Kidney (tissue), 22 donors: ENCODE measurements at regions of chr1 and their contacts with region 1.

Region 1: DNA sequence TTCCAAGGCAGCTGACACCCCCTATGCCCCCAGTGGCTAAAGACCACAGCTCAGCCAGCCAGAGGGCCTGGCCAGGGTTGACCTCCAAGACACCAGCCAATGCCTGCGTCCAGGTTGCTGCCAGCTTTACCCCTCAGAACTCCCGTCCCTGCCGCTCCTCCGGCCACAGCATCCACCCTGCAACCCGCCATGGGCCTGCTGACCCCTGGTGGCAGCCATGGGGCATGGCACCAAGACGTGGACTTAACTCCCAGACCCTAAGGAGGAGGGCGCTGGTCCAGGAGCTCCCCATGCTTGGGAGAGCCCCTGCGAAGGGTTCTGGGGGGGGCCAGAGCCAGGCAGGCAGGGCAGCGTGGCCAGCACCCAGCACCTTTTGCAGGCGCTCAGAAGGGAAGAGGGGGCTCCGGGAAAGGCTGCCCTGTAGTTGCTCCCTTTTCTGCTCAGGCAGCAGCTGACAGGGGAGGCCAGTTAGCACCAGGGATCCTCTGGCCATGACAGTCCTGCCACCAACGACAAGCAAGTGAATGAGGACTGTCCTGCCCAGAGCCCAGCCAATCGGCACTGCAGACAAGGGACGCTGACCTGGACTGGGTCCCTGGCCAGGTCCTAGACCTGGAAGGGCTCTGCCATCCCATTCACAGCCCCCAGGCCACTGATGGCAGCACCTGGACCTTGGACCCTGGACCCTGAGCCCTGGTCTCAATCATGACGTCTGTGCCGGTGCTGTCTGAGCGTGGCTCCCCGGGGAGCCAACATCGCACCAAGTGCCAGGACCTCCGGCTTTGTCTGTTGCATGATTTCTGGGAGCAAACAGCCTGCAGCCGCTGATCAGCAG is 246.2 kb downstream of the NPHP4 start:
- DNase-seq: peak; percentile 76 to 86 (median 84)
- H3K4me3 ChIP-seq: no peak overlapping the region
- H3K27ac ChIP-seq: no peak overlapping the region
- H3K4me1 ChIP-seq: peaks cover 0 to 4% (median 0%) of the 10 kb centered on the region in 3 donors
- H3K27me3 ChIP-seq: no peaks in the 10 kb centered on the region
- CTCF ChIP-seq: peak; percentile 87

Region 2: GRCh38 chr1:4652631-4653327 is 1093.2 kb before region 1 on chr1:
- intact Hi-C with region 1: loop called (anchors 10 kb)
- DNase-seq: peak; percentile 57 to 86 (median 72)
- H3K4me3 ChIP-seq: no peak overlapping the region
- H3K27ac ChIP-seq: peak overlapping the region; percentile 37 to 71
- H3K4me1 ChIP-seq: peaks cover 0 to 11% (median 5%) of the 10 kb centered on the region in 3 donors
- H3K27me3 ChIP-seq: peaks cover 17% of the 10 kb centered on the region
- CTCF ChIP-seq: peak; percentile 83

Region 3: DNA sequence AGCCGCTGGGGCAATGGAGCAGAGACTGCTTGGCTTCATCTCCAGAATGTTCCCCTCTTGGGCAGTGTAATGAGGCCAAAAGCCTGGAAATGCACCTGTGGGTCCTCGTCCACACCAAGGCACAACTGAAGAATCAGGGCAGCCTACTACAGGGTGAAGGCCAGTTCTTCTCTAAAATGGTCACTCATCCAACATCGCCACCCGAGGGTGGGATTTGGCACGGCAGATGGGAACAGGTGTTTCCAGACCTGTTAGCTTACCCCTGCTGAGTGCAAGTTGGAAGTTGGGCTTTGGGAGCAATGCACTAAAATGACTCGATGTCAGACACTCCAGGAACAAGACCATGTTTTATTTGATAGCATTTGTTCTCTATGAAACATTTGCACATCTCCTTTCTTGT is 297.5 kb before region 1 on chr1:
- intact Hi-C with region 1: no loop called
- DNase-seq: no peak
- H3K4me3 ChIP-seq: no peak overlapping the region
- H3K27ac ChIP-seq: no peak overlapping the region
- H3K4me1 ChIP-seq: no peaks in the 10 kb centered on the region
- H3K27me3 ChIP-seq: no peaks in the 10 kb centered on the region
- CTCF ChIP-seq: no peak